AG04449 (cell line): ENCODE measurements at regions of chr3 and their contacts with region 1.

Region 1: DNA sequence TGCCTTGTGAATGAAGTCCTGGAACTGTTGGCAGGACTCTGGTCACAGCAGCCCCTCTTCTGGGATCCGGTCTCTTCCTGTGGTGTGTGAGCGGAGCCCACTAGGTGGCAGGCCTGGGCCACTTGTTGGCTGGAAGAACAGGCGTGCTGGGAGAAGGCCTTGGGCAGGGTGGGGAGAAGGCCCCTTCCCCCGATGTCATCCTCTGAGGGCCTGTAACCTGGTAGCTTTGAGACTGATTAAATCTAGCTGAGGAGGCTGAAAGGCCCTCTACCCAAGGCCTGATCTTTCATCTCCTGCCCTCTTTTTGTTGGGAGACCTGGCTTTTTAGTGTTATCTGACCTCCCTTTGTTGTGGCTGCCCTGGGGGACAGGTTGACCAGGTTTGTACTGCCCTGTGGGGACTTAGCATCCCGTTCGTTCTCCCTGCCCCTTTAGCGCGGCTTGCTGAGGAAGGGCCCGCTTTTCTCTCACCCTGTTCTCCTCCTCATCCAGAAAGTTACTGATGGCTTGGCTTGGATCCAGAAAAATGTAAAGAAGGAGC is 48.3 kb downstream of the CHCHD6 start:
- DNase-seq: peak; percentile 14
- H3K4me3 ChIP-seq: no peak overlapping the region
- CTCF ChIP-seq: peak; percentile 96

Region 2: GRCh38 chr3:126765187-126766069 is 13.1 kb after region 1 on chr3:
- CTCF ChIA-PET with region 1: interaction called, 27 read pairs
- POLR2A ChIA-PET with region 1: no interaction called
- DNase-seq: no peak
- H3K4me3 ChIP-seq: no peak overlapping the region
- CTCF ChIP-seq: no peak

Region 3: GRCh38 chr3:126959921-126960603 is 207.7 kb after region 1 on chr3:
- CTCF ChIA-PET with region 1: interaction called, 19 read pairs
- POLR2A ChIA-PET with region 1: no interaction called
- DNase-seq: no peak
- H3K4me3 ChIP-seq: no peak overlapping the region
- CTCF ChIP-seq: peak; percentile 59

Region 4: DNA sequence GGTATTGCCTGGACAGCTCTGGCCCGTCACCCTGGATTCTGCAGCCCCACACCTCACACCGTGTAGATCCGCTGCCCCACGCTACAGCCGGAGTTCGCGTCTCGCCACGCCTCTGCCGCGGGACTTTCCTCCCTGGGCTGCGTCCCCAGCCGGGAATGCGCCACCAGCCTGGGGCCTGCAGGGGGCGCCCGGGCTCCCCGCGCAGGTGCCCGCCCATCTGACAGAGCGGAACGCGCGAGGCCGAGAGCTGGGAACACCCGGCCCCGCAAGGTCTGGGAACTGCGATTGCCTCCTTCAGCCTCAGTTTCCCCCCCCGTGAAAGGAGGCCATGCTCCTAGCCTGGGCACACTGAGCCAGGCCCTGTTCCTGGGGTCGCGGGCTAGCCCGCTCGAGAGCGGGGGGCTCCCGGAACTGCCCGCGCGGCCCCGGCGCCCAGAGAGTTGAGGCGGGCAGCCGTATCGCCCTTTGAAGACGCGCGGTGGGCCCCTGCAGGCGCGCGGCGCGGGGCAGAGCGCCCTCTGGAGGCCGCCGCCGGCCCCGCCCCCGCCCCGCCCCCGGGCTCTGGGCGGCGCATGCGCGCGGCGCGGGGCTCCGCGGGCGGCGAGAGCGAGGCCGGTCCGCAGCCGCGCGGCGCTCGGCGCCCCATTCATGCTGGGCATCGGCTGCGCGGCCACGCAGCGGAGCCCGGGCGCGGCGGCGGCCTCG is 230.2 kb after region 1 on chr3 and contains the start of gene PLXNA1:
- CTCF ChIA-PET with region 1: interaction called, 211 read pairs
- POLR2A ChIA-PET with region 1: interaction called, 3 read pairs
- DNase-seq: no peak
- H3K4me3 ChIP-seq: peak within 1 kb of the TSS; percentile 69
- CTCF ChIP-seq: peak; percentile 99

Region 5: DNA sequence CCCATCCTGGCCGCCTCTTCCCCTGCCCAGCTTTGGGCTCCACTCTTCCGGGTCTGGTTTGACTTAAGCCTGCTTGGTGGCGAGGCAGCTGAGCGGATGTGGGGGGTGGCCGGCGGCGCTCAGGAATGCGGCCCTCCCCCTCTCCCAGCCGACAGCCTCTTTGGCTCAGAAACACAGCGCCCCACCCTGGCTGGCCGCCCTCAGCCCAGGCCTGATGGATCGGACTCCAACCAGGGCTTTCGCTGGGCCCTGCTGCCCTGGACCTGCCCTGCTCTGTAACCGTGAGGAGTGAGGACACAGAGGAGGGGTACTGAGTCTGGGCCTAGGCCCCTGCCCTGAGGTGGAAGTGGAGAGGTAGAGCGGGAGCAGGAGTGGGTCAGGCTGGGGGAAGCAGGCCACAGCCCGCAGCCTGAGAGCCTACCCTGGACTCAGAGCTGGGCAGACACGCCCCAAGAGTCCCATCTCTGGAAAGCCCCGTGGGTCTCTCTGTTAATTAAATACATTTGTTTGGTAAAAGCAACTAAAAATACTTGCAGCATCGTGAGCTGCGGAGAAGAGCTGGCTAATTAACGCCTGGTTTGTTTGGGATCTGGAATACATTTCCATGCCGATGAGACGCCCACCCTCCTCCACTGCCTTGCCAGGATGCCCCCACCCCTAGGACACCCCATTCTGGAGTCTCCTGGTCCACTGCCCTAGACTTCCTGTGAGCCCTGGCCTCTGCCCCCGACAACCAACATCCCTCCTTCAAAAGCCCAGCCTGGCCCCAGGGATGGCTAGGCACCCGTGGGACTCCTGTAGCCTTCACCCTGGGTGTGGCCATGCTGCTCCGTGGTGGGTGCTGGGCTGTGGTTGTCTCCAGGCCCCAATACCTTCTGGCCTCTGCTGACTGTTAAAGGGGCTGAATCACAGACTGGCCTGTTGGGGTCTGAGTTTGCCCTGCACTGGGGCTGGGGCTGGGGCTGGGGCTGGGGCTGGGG is 250.1 kb after region 1 on chr3:
- CTCF ChIA-PET with region 1: interaction called, 60 read pairs
- POLR2A ChIA-PET with region 1: interaction called, 3 read pairs
- DNase-seq: peak; percentile 55
- H3K4me3 ChIP-seq: peak overlapping the region; percentile 51
- CTCF ChIP-seq: peak; percentile 86

Region 6: DNA sequence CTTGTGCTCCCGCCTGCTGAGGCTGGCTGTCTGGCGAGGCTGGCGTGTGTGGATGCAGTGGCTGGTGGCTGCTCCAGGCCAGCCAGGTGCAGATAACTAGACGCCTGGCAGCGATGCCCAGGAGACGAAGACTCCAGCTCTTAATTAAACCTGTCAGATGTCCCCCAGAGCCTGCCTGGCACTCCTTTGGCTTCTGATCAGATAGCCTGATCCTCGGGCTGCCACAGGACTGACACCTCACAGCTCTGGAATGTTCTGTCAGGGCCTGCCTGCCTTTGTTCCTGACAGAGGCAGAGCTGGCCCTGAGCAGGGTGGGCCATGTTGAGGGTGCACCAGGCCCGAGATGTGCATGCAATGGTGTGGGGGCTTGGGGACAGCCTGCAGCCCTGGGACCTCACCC is 267.1 kb after region 1 on chr3:
- CTCF ChIA-PET with region 1: interaction called, 29 read pairs
- POLR2A ChIA-PET with region 1: no interaction called
- DNase-seq: no peak
- H3K4me3 ChIP-seq: no peak overlapping the region
- CTCF ChIP-seq: no peak

Region 7: GRCh38 chr3:127544192-127544802 is 791.9 kb after region 1 on chr3:
- CTCF ChIA-PET with region 1: interaction called, 35 read pairs
- POLR2A ChIA-PET with region 1: no interaction called
- DNase-seq: peak; percentile 7
- H3K4me3 ChIP-seq: no peak overlapping the region
- CTCF ChIP-seq: peak; percentile 84